ENCODE measurements at regions of chr4 and their contacts with region 1.

Region 1: GRCh38 chr4:147096667-147097604 is 151.3 kb upstream of the TTC29 start:
- DNase-seq: no peak
- H3K4me3 ChIP-seq: no peak overlapping the region
- H3K27ac ChIP-seq: no peak overlapping the region
- H3K4me1 ChIP-seq: no peaks in the 10 kb centered on the region
- H3K27me3 ChIP-seq: peaks cover 0 to 4% (median 0%) of the 10 kb centered on the region in 7 donors
- CTCF ChIP-seq: peak; percentile 31 to 81 (median 67)
- POLR2A ChIP-seq: no peak

Region 2: GRCh38 chr4:146342600-146343192 is 754.2 kb before region 1 on chr4:
- intact Hi-C with region 1: loop called (anchors 10 kb)
- DNase-seq: no peak
- H3K4me3 ChIP-seq: no peak overlapping the region
- H3K27ac ChIP-seq: no peak overlapping the region
- H3K4me1 ChIP-seq: peaks cover 0 to 16% (median 4%) of the 10 kb centered on the region in 6 donors
- H3K27me3 ChIP-seq: no peaks in the 10 kb centered on the region
- CTCF ChIP-seq: peak in 7 of 11 experiments; percentile 13 to 60 (median 37)
- POLR2A ChIP-seq: no peak

Region 3: GRCh38 chr4:147019061-147019460 is 77.9 kb before region 1 on chr4:
- intact Hi-C with region 1: loop called (anchors 5 kb)
- DNase-seq: peak; percentile 78
- H3K4me3 ChIP-seq: no peak overlapping the region
- H3K27ac ChIP-seq: no peak overlapping the region
- H3K4me1 ChIP-seq: no peaks in the 10 kb centered on the region
- H3K27me3 ChIP-seq: no peaks in the 10 kb centered on the region
- CTCF ChIP-seq: peak in 10 of 11 experiments; percentile 23 to 72 (median 61)
- POLR2A ChIP-seq: no peak

Region 4: GRCh38 chr4:147034372-147034771 is 62.6 kb before region 1 on chr4:
- intact Hi-C with region 1: no loop called
- DNase-seq: no peak
- H3K4me3 ChIP-seq: no peak overlapping the region
- H3K27ac ChIP-seq: no peak overlapping the region
- H3K4me1 ChIP-seq: no peaks in the 10 kb centered on the region
- H3K27me3 ChIP-seq: peaks cover 0 to 10% (median 0%) of the 10 kb centered on the region in 7 donors
- CTCF ChIP-seq: no peak
- POLR2A ChIP-seq: no peak

Measured in spleen (tissue), 13 donors.